ENCODE measurements at regions of chr5 and their contacts with region 1.

Region 1: GRCh38 chr5:103785569-103785968 is 223.0 kb upstream of the NUDT12 start:
- DNase-seq: peak; percentile 24
- ATAC-seq: no peak
- H3K4me3 ChIP-seq: no peak overlapping the region
- H3K27ac ChIP-seq: no peak overlapping the region
- H3K4me1 ChIP-seq: no peaks in the 10 kb centered on the region
- H3K27me3 ChIP-seq: no peaks in the 10 kb centered on the region
- CTCF ChIP-seq: no peak

Region 2: DNA sequence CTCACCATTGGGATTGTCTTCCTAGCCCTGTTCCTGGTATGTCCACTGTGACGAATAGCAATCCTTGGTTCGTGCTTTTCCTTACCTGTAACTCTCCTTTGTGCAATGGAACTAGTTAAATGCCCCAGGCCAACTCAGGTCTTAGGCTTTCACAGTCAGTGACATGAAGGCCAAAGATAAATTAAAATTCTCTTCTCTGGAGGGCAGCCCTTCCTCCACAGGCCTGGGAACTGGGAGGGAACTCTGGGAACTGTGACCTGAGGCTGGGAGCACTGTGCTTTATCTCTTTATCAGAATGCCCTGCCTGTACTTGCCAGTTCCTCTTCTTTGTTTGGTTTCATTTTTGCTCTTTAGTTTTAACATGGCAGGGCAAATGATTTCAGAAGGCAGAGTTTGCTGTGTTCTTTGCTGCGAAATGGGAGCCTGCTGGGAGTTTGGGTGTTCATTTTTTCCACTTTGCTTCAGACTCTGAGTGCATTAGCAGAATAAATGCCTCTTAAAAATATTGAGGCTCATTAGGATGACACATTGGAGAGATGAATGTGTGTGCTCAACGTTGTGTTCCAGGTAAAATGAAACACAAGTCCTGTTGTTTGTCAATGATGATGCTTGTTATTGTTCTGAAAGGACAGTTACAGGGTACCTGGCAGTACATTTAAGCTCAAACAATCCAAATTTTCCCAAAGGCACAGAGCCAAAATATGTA is 341.1 kb before region 1 on chr5:
- CTCF ChIA-PET with region 1: no interaction called
- POLR2A ChIA-PET with region 1: no interaction called
- intact Hi-C with region 1: no loop called
- DNase-seq: peak; percentile 45
- ATAC-seq: peak; percentile 60
- H3K4me3 ChIP-seq: no peak overlapping the region
- H3K27ac ChIP-seq: peak overlapping the region; percentile 8; the same call in 1 of the 2 replicates
- H3K4me1 ChIP-seq: peaks cover 33% of the 10 kb centered on the region
- H3K27me3 ChIP-seq: no peaks in the 10 kb centered on the region
- CTCF ChIP-seq: no peak

Region 3: DNA sequence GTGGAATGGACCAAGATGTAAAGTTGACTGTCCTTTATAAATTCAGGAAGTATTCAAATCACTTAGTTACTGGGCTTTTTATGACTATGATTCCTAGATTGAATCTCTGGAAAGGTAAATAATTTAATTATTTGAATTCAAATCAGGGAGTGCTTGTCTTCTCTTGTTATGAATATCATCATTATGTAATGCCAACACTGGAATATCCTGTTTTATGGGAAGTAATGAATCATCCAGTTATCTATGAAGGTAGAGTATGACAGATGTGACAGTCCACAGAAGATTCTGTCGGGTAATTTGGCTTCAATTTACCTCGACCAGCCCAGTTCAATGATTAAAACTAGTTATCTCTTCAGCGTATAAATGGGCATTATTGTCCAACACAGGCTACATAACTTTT is 82.0 kb before region 1 on chr5:
- CTCF ChIA-PET with region 1: no interaction called
- POLR2A ChIA-PET with region 1: no interaction called
- intact Hi-C with region 1: loop called (anchors 5 kb)
- DNase-seq: peak; percentile 81
- ATAC-seq: peak; percentile 83
- H3K4me3 ChIP-seq: no peak overlapping the region
- H3K27ac ChIP-seq: no peak overlapping the region
- H3K4me1 ChIP-seq: peaks cover 13% of the 10 kb centered on the region; the same call in 1 of the 2 replicates
- H3K27me3 ChIP-seq: no peaks in the 10 kb centered on the region
- CTCF ChIP-seq: no peak